Naive thymus-derived CD4-positive, alpha-beta T cell (primary cell): ENCODE measurements at regions of chr19 and their contacts with region 1.

Region 1: GRCh38 chr19:55117636-55118391 is at the start of gene PPP1R12C:
- DNase-seq: peak; percentile 88 to 97 (median 91)
- ATAC-seq: peak; percentile 95
- H3K4me3 ChIP-seq: peak within 1 kb of the TSS; percentile 97
- H3K4me3 Mint-ChIP-seq: peak within 1 kb of the TSS; percentile 96 to 100 (median 98)
- H3K27ac ChIP-seq: peak within 1 kb of the TSS; percentile 74
- H3K27ac Mint-ChIP-seq: peak within 1 kb of the TSS; percentile 91 to 96 (median 95)
- H3K4me1 ChIP-seq: peaks cover 12 to 19% of the 10 kb centered on the region in 2 donors
- H3K4me1 Mint-ChIP-seq: peaks cover 14 to 47% (median 36%) of the 10 kb centered on the region in 7 donors
- H3K27me3 ChIP-seq: no peaks in the 10 kb centered on the region
- H3K27me3 Mint-ChIP-seq: peaks cover 0 to 13% (median under 1%) of the 10 kb centered on the region in 5 donors
- total RNA-seq, gene PPP1R12C: 107 to 180 (median 144) TPM

Region 2: GRCh38 chr19:54600212-54600611 is 517.6 kb before region 1 on chr19:
- CTCF ChIA-PET with region 1: no interaction called
- POLR2A ChIA-PET with region 1: no interaction called
- intact Hi-C with region 1: no loop called
- DNase-seq: no peak
- ATAC-seq: no peak
- H3K4me3 ChIP-seq: no peak overlapping the region
- H3K4me3 Mint-ChIP-seq: no peak overlapping the region
- H3K27ac ChIP-seq: no peak overlapping the region
- H3K27ac Mint-ChIP-seq: no peak overlapping the region
- H3K4me1 ChIP-seq: no peaks in the 10 kb centered on the region
- H3K4me1 Mint-ChIP-seq: no peaks in the 10 kb centered on the region
- H3K27me3 ChIP-seq: no peaks in the 10 kb centered on the region
- H3K27me3 Mint-ChIP-seq: peaks cover 12 to 60% (median 41%) of the 10 kb centered on the region in 5 donors

Region 3: GRCh38 chr19:54882758-54883157 is 235.1 kb before region 1 on chr19:
- CTCF ChIA-PET with region 1: no interaction called
- POLR2A ChIA-PET with region 1: no interaction called
- intact Hi-C with region 1: loop called in 1 of 2 experiments (anchors 5 kb)
- DNase-seq: no peak
- ATAC-seq: peak; percentile 40
- H3K4me3 ChIP-seq: no peak overlapping the region
- H3K4me3 Mint-ChIP-seq: peak overlapping the region in 2 of 10 donors; percentile 36 to 68
- H3K27ac ChIP-seq: no peak overlapping the region
- H3K27ac Mint-ChIP-seq: peak overlapping the region in 2 of 9 donors; percentile 51 to 82
- H3K4me1 ChIP-seq: no peaks in the 10 kb centered on the region
- H3K4me1 Mint-ChIP-seq: peaks cover 0 to 11% (median 0%) of the 10 kb centered on the region in 7 donors
- H3K27me3 ChIP-seq: no peaks in the 10 kb centered on the region
- H3K27me3 Mint-ChIP-seq: peaks cover 12 to 51% (median 35%) of the 10 kb centered on the region in 5 donors

Region 4: GRCh38 chr19:55088543-55089341 is 29.1 kb before region 1 on chr19:
- CTCF ChIA-PET with region 1: no interaction called
- POLR2A ChIA-PET with region 1: no interaction called
- intact Hi-C with region 1: loop called in 1 of 2 experiments (anchors 1 kb)
- DNase-seq: peak; percentile 33 to 85 (median 60)
- ATAC-seq: peak; percentile 73
- H3K4me3 ChIP-seq: no peak overlapping the region
- H3K4me3 Mint-ChIP-seq: peak overlapping the region; percentile 40 to 84 (median 73)
- H3K27ac ChIP-seq: no peak overlapping the region
- H3K27ac Mint-ChIP-seq: peak overlapping the region in 1 of 9 donors; percentile 17
- H3K4me1 ChIP-seq: peaks cover 12 to 19% of the 10 kb centered on the region in 2 donors
- H3K4me1 Mint-ChIP-seq: peaks cover 19 to 30% (median 22%) of the 10 kb centered on the region in 7 donors
- H3K27me3 ChIP-seq: peaks cover 0 to 8% of the 10 kb centered on the region in 2 donors
- H3K27me3 Mint-ChIP-seq: peaks cover 35 to 50% (median 44%) of the 10 kb centered on the region in 5 donors

Region 5: GRCh38 chr19:55339048-55339888 is 221.5 kb after region 1 on chr19 and contains the start of gene KMT5C:
- CTCF ChIA-PET with region 1: no interaction called
- POLR2A ChIA-PET with region 1: no interaction called
- intact Hi-C with region 1: loop called in 1 of 2 experiments (anchors 1 kb)
- DNase-seq: peak; percentile 99 to 100 (median 100)
- ATAC-seq: peak; percentile 83
- H3K4me3 ChIP-seq: peak within 1 kb of the TSS; percentile 80
- H3K4me3 Mint-ChIP-seq: peak within 1 kb of the TSS; percentile 87 to 99 (median 96)
- H3K27ac ChIP-seq: peak within 1 kb of the TSS; percentile 93
- H3K27ac Mint-ChIP-seq: peak within 1 kb of the TSS; percentile 88 to 100 (median 97)
- H3K4me1 ChIP-seq: peaks cover 8 to 15% of the 10 kb centered on the region in 2 donors
- H3K4me1 Mint-ChIP-seq: peaks cover 5 to 28% (median 24%) of the 10 kb centered on the region in 7 donors
- H3K27me3 ChIP-seq: no peaks in the 10 kb centered on the region
- H3K27me3 Mint-ChIP-seq: peaks cover 0 to 16% (median 0%) of the 10 kb centered on the region in 5 donors
- total RNA-seq, gene KMT5C: 21.8 to 63.3 (median 27.2) TPM

Region 6: DNA sequence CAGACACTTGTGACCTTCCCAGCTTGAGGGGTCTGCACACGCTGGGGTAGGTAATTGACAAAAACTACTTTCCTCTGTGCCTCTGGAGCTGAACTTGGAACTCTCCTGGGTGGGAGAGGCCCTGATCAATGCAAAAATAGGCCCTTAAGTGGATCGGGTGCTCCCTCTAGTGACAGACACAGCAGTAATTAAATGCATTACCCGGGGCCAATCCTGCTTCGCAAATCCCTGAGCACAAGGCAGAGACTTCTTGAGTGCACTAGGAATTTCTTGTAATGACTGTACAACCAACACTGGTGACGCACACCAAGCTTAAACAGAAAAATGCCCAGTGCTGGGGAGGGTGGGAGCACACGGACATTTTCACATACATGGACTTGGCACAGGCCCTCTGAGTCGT is 300.4 kb after region 1 on chr19:
- CTCF ChIA-PET with region 1: no interaction called
- POLR2A ChIA-PET with region 1: no interaction called
- intact Hi-C with region 1: no loop called
- DNase-seq: peak in 8 of 9 donors; percentile 34 to 72 (median 58)
- ATAC-seq: peak; percentile 82
- H3K4me3 ChIP-seq: no peak overlapping the region
- H3K4me3 Mint-ChIP-seq: peak overlapping the region in 2 of 10 donors; percentile 30 to 41
- H3K27ac ChIP-seq: no peak overlapping the region
- H3K27ac Mint-ChIP-seq: peak overlapping the region in 4 of 9 donors; percentile 7 to 90 (median 31)
- H3K4me1 ChIP-seq: peaks cover 16 to 29% of the 10 kb centered on the region in 2 donors
- H3K4me1 Mint-ChIP-seq: peaks cover 7 to 36% (median 23%) of the 10 kb centered on the region in 7 donors
- H3K27me3 ChIP-seq: no peaks in the 10 kb centered on the region
- H3K27me3 Mint-ChIP-seq: peaks cover 0 to 24% (median 0%) of the 10 kb centered on the region in 5 donors

Region 7: GRCh38 chr19:55476100-55476775 is 358.4 kb after region 1 on chr19 and contains the start of gene ZNF628:
- CTCF ChIA-PET with region 1: no interaction called
- POLR2A ChIA-PET with region 1: no interaction called
- intact Hi-C with region 1: loop called (anchors 1 kb)
- DNase-seq: peak; percentile 88 to 98 (median 96)
- ATAC-seq: peak; percentile 96
- H3K4me3 ChIP-seq: peak within 1 kb of the TSS; percentile 96
- H3K4me3 Mint-ChIP-seq: peak within 1 kb of the TSS; percentile 83 to 93 (median 90)
- H3K27ac ChIP-seq: peak within 1 kb of the TSS; percentile 90
- H3K27ac Mint-ChIP-seq: peak within 1 kb of the TSS; percentile 81 to 95 (median 92)
- H3K4me1 ChIP-seq: peaks cover 14 to 15% of the 10 kb centered on the region in 2 donors
- H3K4me1 Mint-ChIP-seq: peaks cover 15 to 41% (median 29%) of the 10 kb centered on the region in 7 donors
- H3K27me3 ChIP-seq: no peaks in the 10 kb centered on the region
- H3K27me3 Mint-ChIP-seq: no peaks in the 10 kb centered on the region
- total RNA-seq, gene ZNF628: 6.6 to 27.2 (median 9.0) TPM

Region 8: DNA sequence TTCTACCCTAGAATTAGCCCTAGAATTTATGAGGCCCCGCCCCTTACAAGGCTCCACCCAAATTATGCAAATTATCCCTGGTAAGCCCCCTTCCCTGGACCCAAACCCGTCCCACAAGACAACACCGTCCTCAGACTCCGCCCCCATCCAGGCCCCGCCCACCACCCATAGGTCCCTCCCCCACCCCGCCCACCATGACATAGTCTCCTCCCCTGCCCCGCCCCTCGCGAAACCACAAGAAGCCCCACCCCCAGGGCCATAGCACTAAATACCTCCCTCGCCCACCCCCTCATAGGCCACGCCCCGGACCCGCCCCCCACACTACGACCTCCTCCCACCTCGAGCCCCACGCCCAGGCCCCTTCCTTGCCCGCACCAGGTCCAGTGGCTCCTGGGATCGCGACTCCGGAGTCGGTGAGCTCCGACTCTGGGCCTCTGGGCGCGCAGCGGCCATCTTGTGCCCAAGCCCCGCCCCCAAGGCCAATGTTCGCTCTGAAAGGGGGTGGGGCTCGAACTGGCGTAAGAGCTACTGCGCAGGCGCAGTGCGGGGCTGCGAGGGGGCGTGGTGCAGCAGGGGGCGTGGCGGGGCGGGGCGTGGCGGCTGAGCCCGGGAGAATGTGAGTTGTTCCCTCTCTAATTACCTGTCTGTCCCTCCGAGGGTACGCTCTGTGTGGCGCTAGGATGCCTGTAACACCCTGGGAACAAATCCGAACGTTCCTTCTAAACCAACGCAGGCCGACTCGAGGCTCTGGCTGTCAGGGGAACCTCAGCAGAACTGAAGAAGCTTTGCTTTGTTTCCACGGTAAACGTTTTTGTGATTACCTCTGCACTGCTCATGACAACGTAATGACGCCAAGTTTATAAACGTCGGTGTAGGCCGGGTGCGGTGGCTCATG is 506.5 kb after region 1 on chr19 and contains the start of gene ZNF784:
- CTCF ChIA-PET with region 1: no interaction called
- POLR2A ChIA-PET with region 1: no interaction called
- intact Hi-C with region 1: loop called in 1 of 2 experiments (anchors 1 kb)
- DNase-seq: peak; percentile 89 to 99 (median 95)
- ATAC-seq: peak; percentile 90
- H3K4me3 ChIP-seq: peak within 1 kb of the TSS; percentile 76
- H3K4me3 Mint-ChIP-seq: peak within 1 kb of the TSS; percentile 78 to 96 (median 90)
- H3K27ac ChIP-seq: peak within 1 kb of the TSS; percentile 100
- H3K27ac Mint-ChIP-seq: peak within 1 kb of the TSS; percentile 89 to 99 (median 98)
- H3K4me1 ChIP-seq: peaks cover 27 to 46% of the 10 kb centered on the region in 2 donors
- H3K4me1 Mint-ChIP-seq: peaks cover 26 to 65% (median 58%) of the 10 kb centered on the region in 7 donors
- H3K27me3 ChIP-seq: no peaks in the 10 kb centered on the region
- H3K27me3 Mint-ChIP-seq: peaks cover 0 to 18% (median 0%) of the 10 kb centered on the region in 5 donors
- total RNA-seq, gene ZNF784: 5.1 to 17.1 (median 9.0) TPM